ENCODE measurements at regions of chr2 and their contacts with region 1.

Region 1: DNA sequence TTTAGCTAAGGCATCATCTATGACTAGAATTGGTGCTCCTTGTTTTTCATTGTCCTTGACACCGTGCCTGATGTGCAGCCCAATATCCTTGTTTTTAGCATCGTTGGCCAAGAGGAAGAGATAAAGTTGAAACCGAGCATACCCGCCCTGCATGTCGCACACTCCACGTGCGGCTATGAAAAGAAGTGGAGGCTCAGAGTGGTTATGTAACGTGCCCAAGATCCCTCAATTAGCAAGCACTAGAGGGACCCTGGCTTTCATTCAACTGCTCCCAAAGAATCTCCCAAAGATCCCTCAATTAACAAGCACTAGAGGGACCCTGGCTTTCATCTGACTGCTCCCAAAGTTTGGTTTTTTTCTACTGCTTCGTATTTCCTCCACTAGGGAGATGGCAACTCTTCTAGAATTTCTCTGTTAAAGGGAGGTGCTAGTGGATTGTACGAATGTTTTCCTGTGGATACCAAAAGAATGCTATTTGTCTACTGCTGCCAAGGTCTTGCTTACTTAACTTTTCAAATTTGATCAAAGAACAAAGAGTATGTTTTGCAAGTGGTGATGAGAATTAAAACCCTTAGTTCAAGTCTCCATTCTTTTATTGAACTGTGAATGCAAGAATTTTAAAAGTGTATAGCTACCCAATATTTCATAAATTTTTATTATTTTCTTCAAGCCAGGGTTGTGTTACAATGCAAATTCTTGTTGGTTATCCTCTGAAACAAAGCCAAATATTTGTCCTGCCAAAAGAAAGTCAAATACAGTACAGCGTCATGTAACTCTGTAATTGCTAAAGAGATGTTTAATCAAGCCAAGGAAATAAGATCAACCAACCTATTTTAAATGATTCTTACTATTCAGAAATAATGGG is 92.1 kb downstream of the AOX1 start:
- DNase-seq: peak; percentile 50
- ATAC-seq: peak; percentile 79
- H3K4me3 ChIP-seq: no peak overlapping the region
- H3K27ac ChIP-seq: peak overlapping the region; percentile 16
- H3K4me1 ChIP-seq: peaks cover 26% of the 10 kb centered on the region
- H3K27me3 ChIP-seq: no peaks in the 10 kb centered on the region
- CTCF ChIP-seq: no peak
- EP300 ChIP-seq: peak in 1 of 2 experiments; percentile 35; a peak in 1 of 4 replicates
- POLR2A ChIP-seq: no peak
- RAD21 ChIP-seq: 0 out of 2 replicates have a peak, but pooled peaks have one; percentile 12

Region 2: DNA sequence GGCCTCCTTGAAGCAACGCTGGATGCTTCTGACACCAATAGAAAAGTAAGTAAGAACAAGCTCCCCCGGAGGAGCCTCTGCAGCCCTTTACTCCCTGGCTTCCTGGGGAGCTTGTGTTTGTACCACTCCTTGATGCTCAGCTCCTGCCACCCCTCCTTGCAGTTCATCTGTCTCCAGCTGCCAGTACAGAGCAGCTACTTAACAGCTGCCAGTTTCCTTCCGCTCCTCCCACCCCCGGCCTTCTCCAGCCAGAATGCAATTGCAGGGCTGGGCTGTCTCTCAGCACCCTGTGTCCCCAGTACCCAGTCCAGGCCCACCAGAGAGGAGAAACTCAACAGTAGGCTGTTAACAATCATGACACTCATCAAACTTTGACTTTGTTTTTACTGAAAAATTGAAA is 17.2 kb after region 1 on chr2:
- CTCF ChIA-PET with region 1: no interaction called
- POLR2A ChIA-PET with region 1: no interaction called
- in situ Hi-C with region 1: no loop called
- intact Hi-C with region 1: loop called (anchors 1 kb)
- DNase-seq: no peak
- ATAC-seq: peak; percentile 59
- H3K4me3 ChIP-seq: no peak overlapping the region
- H3K27ac ChIP-seq: no peak overlapping the region
- H3K4me1 ChIP-seq: peaks cover 6% of the 10 kb centered on the region; the same call in 1 of the 2 replicates
- H3K27me3 ChIP-seq: peaks cover 0 to 6% of the 10 kb centered on the region in 2 experiments; a peak in 1 of 5 replicates
- CTCF ChIP-seq: no peak
- EP300 ChIP-seq: no peak
- POLR2A ChIP-seq: no peak
- RAD21 ChIP-seq: no peak